Mammary epithelial cell (primary cell): ENCODE measurements at regions of chr6 and their contacts with region 1.

Region 1: DNA sequence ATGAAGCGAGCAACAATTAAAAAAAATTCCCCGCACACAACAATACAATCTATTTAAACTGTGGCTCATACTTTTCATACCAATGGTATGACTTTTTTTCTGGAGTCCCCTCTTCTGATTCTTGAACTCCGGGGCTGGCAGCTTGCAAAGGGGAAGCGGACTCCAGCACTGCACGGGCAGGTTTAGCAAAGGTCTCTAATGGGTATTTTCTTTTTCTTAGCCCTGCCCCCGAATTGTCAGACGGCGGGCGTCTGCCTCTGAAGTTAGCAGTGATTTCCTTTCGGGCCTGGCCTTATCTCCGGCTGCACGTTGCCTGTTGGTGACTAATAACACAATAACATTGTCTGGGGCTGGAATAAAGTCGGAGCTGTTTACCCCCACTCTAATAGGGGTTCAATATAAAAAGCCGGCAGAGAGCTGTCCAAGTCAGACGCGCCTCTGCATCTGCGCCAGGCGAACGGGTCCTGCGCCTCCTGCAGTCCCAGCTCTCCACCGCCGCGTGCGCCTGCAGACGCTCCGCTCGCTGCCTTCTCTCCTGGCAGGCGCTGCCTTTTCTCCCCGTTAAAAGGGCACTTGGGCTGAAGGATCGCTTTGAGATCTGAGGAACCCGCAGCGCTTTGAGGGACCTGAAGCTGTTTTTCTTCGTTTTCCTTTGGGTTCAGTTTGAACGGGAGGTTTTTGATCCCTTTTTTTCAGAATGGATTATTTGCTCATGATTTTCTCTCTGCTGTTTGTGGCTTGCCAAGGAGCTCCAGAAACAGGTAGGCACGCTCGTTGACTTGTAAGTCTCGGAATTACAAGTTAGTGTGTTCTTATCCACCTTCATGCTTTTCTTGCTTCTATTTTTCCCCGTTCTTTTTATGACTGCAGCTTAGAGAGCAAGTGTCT is at the start of gene EDN1:
- DNase-seq: peak; percentile 84
- H3K4me3 ChIP-seq: peak within 1 kb of the TSS; percentile 54 to 96 (median 60)
- H3K27ac ChIP-seq: peak within 1 kb of the TSS; percentile 84
- H3K4me1 ChIP-seq: peaks cover 39% of the 10 kb centered on the region
- H3K27me3 ChIP-seq: no peaks in the 10 kb centered on the region
- CTCF ChIP-seq: peak; percentile 22 to 68
- total RNA-seq, gene EDN1: 8.9 to 11.3 TPM

Region 2: GRCh38 chr6:11770546-11771466 is 519.4 kb before region 1 on chr6:
- CTCF ChIA-PET with region 1: no interaction called
- dilution Hi-C with region 1: no loop called
- in situ Hi-C with region 1: no loop called
- intact Hi-C with region 1: loop called (anchors 1 kb)
- DNase-seq: peak; percentile 100
- H3K4me3 ChIP-seq: peak overlapping the region in 2 of 3 experiments; percentile 17 to 27
- H3K27ac ChIP-seq: peak overlapping the region; percentile 99
- H3K4me1 ChIP-seq: peaks cover 75% of the 10 kb centered on the region
- H3K27me3 ChIP-seq: no peaks in the 10 kb centered on the region
- CTCF ChIP-seq: no peak

Region 3: DNA sequence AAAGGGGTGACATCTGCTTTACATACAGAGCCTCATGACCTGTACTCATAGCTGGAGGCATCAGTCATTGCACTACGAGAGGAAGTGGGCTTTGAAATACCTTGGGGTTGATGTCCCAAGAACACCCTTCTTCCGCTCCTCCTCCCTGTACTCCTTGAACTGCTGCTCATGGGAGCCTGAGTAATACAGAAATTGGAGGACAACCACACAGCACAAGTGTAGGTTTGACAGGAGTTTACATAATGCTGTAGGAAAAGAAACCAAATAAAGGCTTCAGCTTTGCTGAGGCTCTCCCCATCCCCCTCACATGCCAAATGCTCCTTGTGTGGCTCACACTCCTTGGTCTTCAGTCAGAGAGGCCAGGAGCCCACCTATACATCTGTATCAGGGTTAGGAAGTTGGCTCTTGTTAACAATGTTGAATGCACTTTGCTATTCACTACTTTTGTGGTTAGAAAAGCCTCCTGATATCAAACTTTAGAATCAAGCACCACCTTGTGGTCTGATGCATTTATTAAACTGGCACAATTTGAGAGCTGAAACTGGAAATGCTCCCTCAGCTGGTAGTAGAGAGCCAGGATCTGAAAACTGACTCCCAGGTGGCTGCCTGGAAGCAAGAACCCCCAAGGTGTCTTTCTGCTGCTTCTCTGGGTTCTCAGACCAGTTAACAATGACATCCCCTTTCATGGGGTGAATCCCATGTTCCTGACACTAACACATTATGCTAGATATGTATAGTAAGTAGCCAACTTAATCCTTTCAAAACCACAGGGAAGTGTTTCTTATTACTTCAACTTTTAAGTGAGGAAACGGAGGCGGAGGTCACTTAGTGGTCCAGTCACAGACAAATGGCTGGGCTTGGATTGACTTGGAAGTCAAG is 56.2 kb before region 1 on chr6:
- CTCF ChIA-PET with region 1: interaction called, 8 read pairs
- dilution Hi-C with region 1: no loop called
- in situ Hi-C with region 1: no loop called
- intact Hi-C with region 1: loop called (anchors 1 kb)
- DNase-seq: peak; percentile 82
- H3K4me3 ChIP-seq: no peak overlapping the region
- H3K27ac ChIP-seq: no peak overlapping the region
- H3K4me1 ChIP-seq: peaks cover 5% of the 10 kb centered on the region
- H3K27me3 ChIP-seq: no peaks in the 10 kb centered on the region
- CTCF ChIP-seq: peak; percentile 74 to 84

Region 4: GRCh38 chr6:12395898-12396297 is 105.7 kb after region 1 on chr6:
- CTCF ChIA-PET with region 1: no interaction called
- dilution Hi-C with region 1: no loop called
- in situ Hi-C with region 1: no loop called
- intact Hi-C with region 1: loop called (anchors 2 kb)
- DNase-seq: no peak
- H3K4me3 ChIP-seq: no peak overlapping the region
- H3K27ac ChIP-seq: no peak overlapping the region
- H3K4me1 ChIP-seq: no peaks in the 10 kb centered on the region
- H3K27me3 ChIP-seq: no peaks in the 10 kb centered on the region
- CTCF ChIP-seq: peak in 1 of 2 donors; percentile 43

Region 5: GRCh38 chr6:12504319-12504966 is 214.3 kb after region 1 on chr6:
- CTCF ChIA-PET with region 1: no interaction called
- dilution Hi-C with region 1: no loop called
- in situ Hi-C with region 1: no loop called
- intact Hi-C with region 1: loop called (anchors 1 kb)
- DNase-seq: peak; percentile 25
- H3K4me3 ChIP-seq: no peak overlapping the region
- H3K27ac ChIP-seq: no peak overlapping the region
- H3K4me1 ChIP-seq: peaks cover 10% of the 10 kb centered on the region
- H3K27me3 ChIP-seq: no peaks in the 10 kb centered on the region
- CTCF ChIP-seq: peak; percentile 54 to 81

Region 6: GRCh38 chr6:12895721-12896120 is 605.5 kb after region 1 on chr6:
- CTCF ChIA-PET with region 1: no interaction called
- dilution Hi-C with region 1: no loop called
- in situ Hi-C with region 1: no loop called
- intact Hi-C with region 1: loop called (anchors 2 kb)
- DNase-seq: no peak
- H3K4me3 ChIP-seq: no peak overlapping the region
- H3K27ac ChIP-seq: no peak overlapping the region
- H3K4me1 ChIP-seq: no peaks in the 10 kb centered on the region
- H3K27me3 ChIP-seq: peaks cover 3% of the 10 kb centered on the region
- CTCF ChIP-seq: no peak